ENCODE measurements at regions of chr18 and their contacts with region 1.

Region 1: DNA sequence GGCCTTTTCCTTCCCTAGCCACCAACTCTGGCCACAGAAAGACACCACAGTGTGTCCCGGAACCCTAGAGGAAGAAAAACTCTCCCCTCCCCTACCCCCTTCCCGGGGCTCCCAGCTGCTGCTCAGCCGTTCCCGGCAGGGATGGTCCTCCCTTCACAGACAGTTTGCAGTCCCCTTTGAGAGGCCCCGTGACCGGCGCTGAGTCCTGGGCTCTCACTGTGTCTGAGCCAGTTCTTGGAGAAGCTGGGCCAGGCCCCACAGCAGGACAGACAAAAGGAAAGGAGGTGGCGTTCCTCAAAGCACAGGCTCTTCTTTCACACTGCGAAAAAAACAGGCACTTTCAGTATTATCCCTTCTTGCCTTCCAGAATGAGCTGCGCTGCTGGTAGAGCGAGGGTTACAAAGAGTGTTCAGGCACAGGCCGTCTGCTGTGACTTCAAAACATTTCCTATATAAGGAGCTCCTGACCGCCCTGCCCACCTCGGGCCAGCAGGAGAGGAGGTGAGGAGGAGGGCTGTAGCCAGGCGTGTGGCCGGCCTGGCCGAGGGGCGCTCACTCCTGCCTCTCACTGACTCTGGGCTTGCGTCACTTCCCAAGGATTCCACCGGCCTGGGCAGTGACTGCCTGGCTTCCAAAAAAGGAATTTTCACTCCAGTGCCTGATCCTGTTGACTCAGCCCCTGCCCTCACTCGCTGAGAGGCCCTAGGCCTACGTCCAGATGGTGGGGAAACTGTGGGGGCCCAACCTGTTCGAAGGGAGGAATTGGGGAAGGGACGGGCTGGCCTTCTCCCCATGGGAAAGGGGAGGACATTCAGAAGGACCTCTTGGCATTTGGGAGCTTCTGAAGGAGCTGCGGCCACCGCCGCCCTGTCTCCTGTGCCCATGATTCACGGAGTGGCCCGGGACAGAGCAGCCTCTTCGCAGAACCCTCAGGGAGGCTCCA is 24.9 kb downstream of the CIDEA start:
- DNase-seq: peak; percentile 91
- H3K4me3 ChIP-seq: peak overlapping the region; percentile 65
- CTCF ChIP-seq: peak; percentile 36

Region 2: DNA sequence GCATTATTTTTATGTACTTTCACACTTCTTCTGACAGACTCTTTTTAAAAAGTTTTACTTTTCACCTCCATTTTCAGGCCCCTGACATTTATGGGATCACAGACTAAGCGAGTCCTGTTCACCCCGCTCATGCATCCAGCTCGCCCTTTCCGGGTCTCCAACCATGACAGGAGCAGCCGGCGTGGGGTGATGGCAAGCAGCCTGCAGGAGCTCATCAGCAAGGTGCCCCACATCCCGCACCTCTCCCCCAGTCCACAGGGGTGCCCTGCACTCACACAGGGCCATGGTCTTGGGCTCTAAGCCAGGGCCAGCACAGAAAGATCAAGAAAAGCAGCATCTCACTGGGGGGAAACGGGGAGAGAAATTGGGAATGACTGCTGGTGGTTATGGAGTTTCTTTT is 16.3 kb before region 1 on chr18:
- CTCF ChIA-PET with region 1: interaction called, 42 read pairs
- POLR2A ChIA-PET with region 1: interaction called, 4 read pairs
- DNase-seq: no peak
- H3K4me3 ChIP-seq: no peak overlapping the region
- CTCF ChIP-seq: no peak

Region 3: GRCh38 chr18:12295901-12296386 is 16.9 kb after region 1 on chr18:
- CTCF ChIA-PET with region 1: interaction called, 6 read pairs
- POLR2A ChIA-PET with region 1: interaction called, 11 read pairs
- DNase-seq: no peak
- H3K4me3 ChIP-seq: no peak overlapping the region
- CTCF ChIP-seq: no peak

Region 4: GRCh38 chr18:12308386-12309100 is 29.5 kb after region 1 on chr18:
- CTCF ChIA-PET with region 1: interaction called, 11 read pairs
- POLR2A ChIA-PET with region 1: interaction called, 59 read pairs
- DNase-seq: no peak
- H3K4me3 ChIP-seq: peak overlapping the region; percentile 93
- CTCF ChIP-seq: no peak

Region 5: GRCh38 chr18:12317664-12318333 is 38.8 kb after region 1 on chr18:
- CTCF ChIA-PET with region 1: interaction called, 34 read pairs
- POLR2A ChIA-PET with region 1: interaction called, 16 read pairs
- DNase-seq: no peak
- H3K4me3 ChIP-seq: no peak overlapping the region
- CTCF ChIP-seq: no peak

Region 6: GRCh38 chr18:12327510-12328178 is 48.6 kb after region 1 on chr18:
- CTCF ChIA-PET with region 1: interaction called, 25 read pairs
- POLR2A ChIA-PET with region 1: interaction called, 5 read pairs
- DNase-seq: peak; percentile 7
- H3K4me3 ChIP-seq: no peak overlapping the region
- CTCF ChIP-seq: peak; percentile 89

Measured in AG04449 (cell line).